Naive thymus-derived CD4-positive, alpha-beta T cell (primary cell): ENCODE measurements at regions of chr7 and their contacts with region 1.

Region 1: GRCh38 chr7:66591799-66592596 is 36.7 kb upstream of the KCTD7 start:
- DNase-seq: peak; percentile 65 to 90 (median 88)
- ATAC-seq: peak; percentile 98
- H3K4me3 ChIP-seq: peak overlapping the region; percentile 88
- H3K4me3 Mint-ChIP-seq: peak overlapping the region; percentile 95 to 99 (median 98)
- H3K27ac ChIP-seq: peak overlapping the region; percentile 82
- H3K27ac Mint-ChIP-seq: peak overlapping the region; percentile 88 to 99 (median 97)
- H3K4me1 ChIP-seq: peaks cover 8 to 16% of the 10 kb centered on the region in 2 donors
- H3K4me1 Mint-ChIP-seq: peaks cover 33 to 69% (median 53%) of the 10 kb centered on the region in 7 donors
- H3K27me3 ChIP-seq: no peaks in the 10 kb centered on the region
- H3K27me3 Mint-ChIP-seq: no peaks in the 10 kb centered on the region

Region 2: GRCh38 chr7:66681491-66682349 is 89.7 kb after region 1 on chr7:
- CTCF ChIA-PET with region 1: no interaction called
- POLR2A ChIA-PET with region 1: interaction called, 4 read pairs
- intact Hi-C with region 1: loop called (anchors 1 kb)
- DNase-seq: peak; percentile 92 to 97 (median 95)
- ATAC-seq: peak; percentile 98
- H3K4me3 ChIP-seq: peak overlapping the region; percentile 96
- H3K4me3 Mint-ChIP-seq: peak overlapping the region; percentile 82 to 96 (median 92)
- H3K27ac ChIP-seq: peak overlapping the region; percentile 95
- H3K27ac Mint-ChIP-seq: peak overlapping the region; percentile 86 to 98 (median 97)
- H3K4me1 ChIP-seq: peaks cover 5 to 11% of the 10 kb centered on the region in 2 donors
- H3K4me1 Mint-ChIP-seq: peaks cover 7 to 59% (median 31%) of the 10 kb centered on the region in 7 donors
- H3K27me3 ChIP-seq: no peaks in the 10 kb centered on the region
- H3K27me3 Mint-ChIP-seq: no peaks in the 10 kb centered on the region

Region 3: DNA sequence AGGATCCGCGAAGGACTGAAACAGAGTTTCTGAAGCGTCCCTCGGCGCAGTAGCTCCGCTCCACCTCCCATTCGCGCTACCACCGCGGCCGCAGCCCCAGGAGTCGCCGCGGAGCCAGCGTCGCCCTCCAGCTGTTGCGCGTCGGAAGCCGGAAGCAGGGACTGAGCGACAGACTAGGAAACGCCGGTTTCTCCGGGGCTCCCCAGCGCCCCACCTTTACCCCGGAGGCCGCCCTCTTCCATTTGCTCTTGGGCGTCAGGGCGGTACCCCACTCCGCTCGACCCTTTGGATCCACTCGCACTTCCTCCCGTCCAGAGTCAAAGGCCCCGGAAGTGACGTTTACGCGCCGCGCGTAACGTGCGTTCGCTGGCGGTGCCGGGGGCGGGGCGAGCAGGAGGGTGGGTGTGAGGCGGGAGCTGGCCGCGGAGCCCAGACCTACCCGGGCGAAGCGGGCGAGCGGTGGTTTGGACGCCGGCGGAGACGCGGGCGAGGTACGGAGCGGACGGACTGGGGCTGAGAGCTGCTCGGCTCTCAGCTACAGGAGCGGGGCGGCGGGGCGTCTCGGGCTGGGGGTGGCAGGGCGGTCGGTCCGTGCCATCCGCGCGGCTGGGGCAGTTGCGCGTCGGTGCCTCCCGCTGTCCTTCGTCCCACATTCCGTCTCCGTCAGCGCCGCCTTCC is 148.4 kb after region 1 on chr7 and contains the start of gene RABGEF1:
- CTCF ChIA-PET with region 1: no interaction called
- POLR2A ChIA-PET with region 1: no interaction called
- intact Hi-C with region 1: loop called (anchors 1 kb)
- DNase-seq: peak; percentile 94 to 98 (median 95)
- ATAC-seq: peak; percentile 95
- H3K4me3 ChIP-seq: peak within 1 kb of the TSS; percentile 82
- H3K4me3 Mint-ChIP-seq: peak within 1 kb of the TSS; percentile 89 to 98 (median 94)
- H3K27ac ChIP-seq: peak within 1 kb of the TSS; percentile 84
- H3K27ac Mint-ChIP-seq: peak within 1 kb of the TSS; percentile 94 to 98 (median 96)
- H3K4me1 ChIP-seq: peaks cover 0 to 6% of the 10 kb centered on the region in 2 donors
- H3K4me1 Mint-ChIP-seq: peaks cover 30 to 74% (median 54%) of the 10 kb centered on the region in 7 donors
- H3K27me3 ChIP-seq: no peaks in the 10 kb centered on the region
- H3K27me3 Mint-ChIP-seq: no peaks in the 10 kb centered on the region
- total RNA-seq, gene RABGEF1: 20.7 to 35.7 (median 22.2) TPM

Region 4: DNA sequence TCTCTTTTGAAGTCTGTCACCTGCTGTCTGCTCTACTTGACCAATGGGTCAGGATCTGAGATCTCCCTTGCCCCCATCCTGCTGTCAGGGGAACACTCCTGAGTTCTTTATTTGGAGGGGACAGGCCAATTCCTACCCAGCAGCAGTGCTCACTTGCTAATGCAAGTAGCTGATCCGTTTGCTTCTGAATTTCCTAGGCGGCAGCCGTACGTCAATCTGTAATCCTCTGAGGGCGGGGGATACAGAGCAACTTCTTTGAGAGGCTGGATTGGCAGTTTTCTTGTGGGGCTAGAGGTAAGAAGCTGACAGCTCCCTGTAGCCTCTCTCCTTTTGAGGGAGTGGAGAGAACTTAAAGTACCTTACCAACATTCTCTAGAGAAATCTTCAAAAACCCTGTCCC is 441.3 kb after region 1 on chr7:
- CTCF ChIA-PET with region 1: no interaction called
- POLR2A ChIA-PET with region 1: no interaction called
- intact Hi-C with region 1: no loop called
- DNase-seq: no peak
- ATAC-seq: no peak
- H3K4me3 ChIP-seq: no peak overlapping the region
- H3K4me3 Mint-ChIP-seq: no peak overlapping the region
- H3K27ac ChIP-seq: no peak overlapping the region
- H3K27ac Mint-ChIP-seq: no peak overlapping the region
- H3K4me1 ChIP-seq: no peaks in the 10 kb centered on the region
- H3K4me1 Mint-ChIP-seq: no peaks in the 10 kb centered on the region
- H3K27me3 ChIP-seq: no peaks in the 10 kb centered on the region
- H3K27me3 Mint-ChIP-seq: no peaks in the 10 kb centered on the region

Region 5: GRCh38 chr7:67302113-67303039 is 710.4 kb after region 1 on chr7:
- CTCF ChIA-PET with region 1: no interaction called
- POLR2A ChIA-PET with region 1: no interaction called
- intact Hi-C with region 1: loop called in 1 of 2 experiments (anchors 10 kb)
- DNase-seq: peak; percentile 90 to 97 (median 95)
- ATAC-seq: peak; percentile 89
- H3K4me3 ChIP-seq: peak overlapping the region; percentile 74
- H3K4me3 Mint-ChIP-seq: peak overlapping the region; percentile 89 to 99 (median 96)
- H3K27ac ChIP-seq: peak overlapping the region; percentile 88
- H3K27ac Mint-ChIP-seq: peak overlapping the region; percentile 87 to 99 (median 98)
- H3K4me1 ChIP-seq: peaks cover 3 to 7% of the 10 kb centered on the region in 2 donors
- H3K4me1 Mint-ChIP-seq: peaks cover 10 to 36% (median 25%) of the 10 kb centered on the region in 7 donors
- H3K27me3 ChIP-seq: no peaks in the 10 kb centered on the region
- H3K27me3 Mint-ChIP-seq: no peaks in the 10 kb centered on the region